Left colon (tissue), 2 donors: ENCODE measurements at regions of chr3 and their contacts with region 1.

Region 1: GRCh38 chr3:10344147-10344943 is 23.4 kb upstream of the SEC13 start:
- DNase-seq: peak in 1 of 2 donors; percentile 29
- ATAC-seq: no peak

Region 2: GRCh38 chr3:10738688-10739372 is 394.5 kb after region 1 on chr3:
- intact Hi-C with region 1: loop called (anchors 10 kb)
- DNase-seq: peak in 1 of 2 donors; percentile 76
- ATAC-seq: peak; percentile 68

Region 3: GRCh38 chr3:10744098-10744465 is 399.7 kb after region 1 on chr3:
- intact Hi-C with region 1: loop called (anchors 10 kb)
- DNase-seq: no peak
- ATAC-seq: peak; percentile 28